Cardiac septum (tissue), 1 donor: ENCODE measurements at regions of chr16 and their contacts with region 1.

Region 1: DNA sequence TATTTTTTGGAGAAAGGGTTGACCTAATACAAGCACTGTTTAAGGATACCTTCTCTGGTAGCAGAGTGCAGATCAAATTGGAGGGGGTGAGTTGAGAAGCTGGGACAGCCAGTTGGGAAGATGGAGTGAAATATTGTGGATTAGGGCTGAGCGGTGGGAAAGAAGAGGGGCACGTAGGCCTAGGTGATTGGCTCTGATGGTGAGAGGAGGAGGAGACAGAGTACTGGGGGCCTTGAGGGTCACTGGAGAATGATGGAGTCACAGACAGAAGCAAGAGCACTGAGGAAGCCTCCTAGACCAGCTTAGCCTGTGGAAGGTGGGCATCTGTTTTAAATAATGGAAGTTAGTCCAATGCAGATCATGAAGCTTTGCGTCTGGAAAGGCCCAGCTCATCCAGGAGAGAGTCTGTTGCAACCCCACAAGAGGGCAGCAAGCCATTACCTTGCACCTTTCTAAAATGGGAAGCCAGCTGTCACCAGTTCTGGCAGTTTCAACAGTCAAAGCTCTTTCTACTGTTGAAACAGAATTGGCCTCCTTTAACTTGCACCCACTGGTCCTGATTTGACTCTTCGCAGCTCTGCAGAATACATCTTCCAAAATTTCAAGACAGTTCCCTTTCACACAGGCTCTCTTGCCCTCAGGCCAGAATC is 11.8 kb downstream of the SLC9A5 start:
- DNase-seq: no peak

Region 2: GRCh38 chr16:67191995-67192681 is 68.4 kb before region 1 on chr16 and contains the start of gene E2F4:
- intact Hi-C with region 1: no loop called
- DNase-seq: peak; percentile 96
- total RNA-seq, gene E2F4: 34.4 TPM

Region 3: GRCh38 chr16:67399181-67399733 is 138.7 kb after region 1 on chr16:
- intact Hi-C with region 1: loop called (anchors 5 kb)
- DNase-seq: peak; percentile 75